Dendritic cell treated with granulocyte-macrophage colony-stimulating factor and Interleukin-4, amounts not matched to agents 40 ng/mL and 50 ng/mL, for 4 days (primary cell): ENCODE measurements at regions of chr4 and their contacts with region 1.

Region 1: DNA sequence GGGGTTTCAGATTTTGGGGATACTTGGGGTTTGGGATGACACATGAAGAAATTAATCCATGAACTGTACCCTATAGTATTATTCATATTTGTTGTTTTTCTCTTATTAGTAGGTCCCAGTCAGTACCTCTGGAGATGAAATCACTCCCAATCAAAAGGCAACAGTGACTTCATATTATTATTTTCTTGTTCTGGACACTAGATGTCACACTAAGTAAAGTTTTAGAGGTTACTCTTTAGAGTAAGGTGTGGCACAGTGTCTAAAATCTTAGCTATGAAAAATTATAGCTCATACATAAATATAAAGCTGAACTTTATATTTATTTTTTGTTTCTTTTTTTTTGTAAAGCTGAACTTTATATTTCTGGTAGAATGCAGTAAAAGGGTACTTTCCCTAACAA is 35.1 kb downstream of the FAM114A1 start:
- H3K4me3 Mint-ChIP-seq: no peak overlapping the region
- H3K27ac Mint-ChIP-seq: no peak overlapping the region
- H3K4me1 Mint-ChIP-seq: no peaks in the 10 kb centered on the region
- H3K27me3 Mint-ChIP-seq: no peaks in the 10 kb centered on the region

Region 2: GRCh38 chr4:39134683-39135319 is 232.1 kb after region 1 on chr4:
- intact Hi-C with region 1: loop called (anchors 1 kb)
- H3K4me3 Mint-ChIP-seq: no peak overlapping the region
- H3K27ac Mint-ChIP-seq: no peak overlapping the region
- H3K4me1 Mint-ChIP-seq: no peaks in the 10 kb centered on the region
- H3K27me3 Mint-ChIP-seq: no peaks in the 10 kb centered on the region